ENCODE measurements at regions of chr5 and their contacts with region 1.

Region 1: DNA sequence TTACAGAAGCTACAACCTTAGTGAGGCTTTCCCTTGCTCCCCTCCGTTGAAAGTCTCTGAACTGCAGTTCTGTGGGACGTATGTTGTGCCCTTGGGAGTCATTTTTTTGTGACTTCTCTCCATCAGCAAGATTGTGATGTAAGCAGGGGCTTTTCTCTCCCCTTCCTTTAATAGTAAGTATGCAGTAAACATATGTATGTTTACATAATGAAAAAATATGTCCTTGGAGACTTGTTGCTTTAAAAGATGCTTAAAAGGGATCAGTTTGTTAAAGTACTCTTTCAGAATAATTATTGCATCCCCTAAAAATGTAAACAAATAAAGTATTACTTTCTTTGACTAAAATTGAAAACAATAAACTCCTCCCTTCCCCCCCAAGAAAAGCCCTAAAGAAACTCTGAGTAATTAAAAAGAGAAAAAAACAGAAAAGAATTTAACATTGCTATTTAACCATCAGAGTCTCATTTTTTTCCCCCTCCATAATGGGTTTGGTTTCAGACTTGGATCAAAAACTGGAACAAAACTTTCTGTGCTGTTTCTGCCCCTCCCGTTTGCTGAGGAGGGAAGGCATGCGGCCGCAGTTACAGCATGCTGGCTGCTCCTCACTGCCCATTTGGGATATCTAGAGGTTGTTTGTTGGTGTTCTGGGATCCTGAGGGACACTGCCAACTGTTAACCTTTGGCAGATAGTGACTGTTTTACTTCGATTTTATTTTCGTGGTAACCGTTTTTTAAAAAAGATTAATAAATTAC is 40.2 kb downstream of the TRIO start:
- DNase-seq: no peak
- ATAC-seq: no peak
- H3K4me3 ChIP-seq: peak overlapping the region; percentile 13 to 29; a peak in 3 of 4 replicates
- H3K27ac ChIP-seq: peak overlapping the region; percentile 99
- H3K4me1 ChIP-seq: peaks cover 97% of the 10 kb centered on the region
- H3K27me3 ChIP-seq: no peaks in the 10 kb centered on the region
- CTCF ChIP-seq: no peak

Region 2: GRCh38 chr5:13804336-13804735 is 379.0 kb before region 1 on chr5:
- CTCF ChIA-PET with region 1: no interaction called
- POLR2A ChIA-PET with region 1: interaction called, 3 read pairs
- in situ Hi-C with region 1: no loop called
- intact Hi-C with region 1: loop called (anchors 5 kb)
- DNase-seq: no peak
- ATAC-seq: no peak
- H3K4me3 ChIP-seq: no peak overlapping the region
- H3K27ac ChIP-seq: no peak overlapping the region
- H3K4me1 ChIP-seq: no peaks in the 10 kb centered on the region
- H3K27me3 ChIP-seq: no peaks in the 10 kb centered on the region
- CTCF ChIP-seq: no peak

Region 3: GRCh38 chr5:14204785-14205321 is 21.5 kb after region 1 on chr5:
- CTCF ChIA-PET with region 1: no interaction called
- POLR2A ChIA-PET with region 1: interaction called, 11 read pairs
- in situ Hi-C with region 1: no loop called
- intact Hi-C with region 1: no loop called
- DNase-seq: no peak
- ATAC-seq: peak; percentile 9
- H3K4me3 ChIP-seq: peak overlapping the region; percentile 7 to 40; a peak in 3 of 4 replicates
- H3K27ac ChIP-seq: peak overlapping the region; percentile 99
- H3K4me1 ChIP-seq: peaks cover 95% of the 10 kb centered on the region
- H3K27me3 ChIP-seq: no peaks in the 10 kb centered on the region
- CTCF ChIP-seq: no peak

Region 4: GRCh38 chr5:14213813-14214585 is 30.6 kb after region 1 on chr5:
- CTCF ChIA-PET with region 1: no interaction called
- POLR2A ChIA-PET with region 1: interaction called, 13 read pairs
- in situ Hi-C with region 1: no loop called
- intact Hi-C with region 1: no loop called
- DNase-seq: no peak
- ATAC-seq: peak; percentile 28
- H3K4me3 ChIP-seq: peak overlapping the region in 1 of 2 experiments; percentile 2; a peak in 1 of 4 replicates
- H3K27ac ChIP-seq: peak overlapping the region; percentile 99
- H3K4me1 ChIP-seq: peaks cover 100% of the 10 kb centered on the region
- H3K27me3 ChIP-seq: no peaks in the 10 kb centered on the region
- CTCF ChIP-seq: no peak

Region 5: DNA sequence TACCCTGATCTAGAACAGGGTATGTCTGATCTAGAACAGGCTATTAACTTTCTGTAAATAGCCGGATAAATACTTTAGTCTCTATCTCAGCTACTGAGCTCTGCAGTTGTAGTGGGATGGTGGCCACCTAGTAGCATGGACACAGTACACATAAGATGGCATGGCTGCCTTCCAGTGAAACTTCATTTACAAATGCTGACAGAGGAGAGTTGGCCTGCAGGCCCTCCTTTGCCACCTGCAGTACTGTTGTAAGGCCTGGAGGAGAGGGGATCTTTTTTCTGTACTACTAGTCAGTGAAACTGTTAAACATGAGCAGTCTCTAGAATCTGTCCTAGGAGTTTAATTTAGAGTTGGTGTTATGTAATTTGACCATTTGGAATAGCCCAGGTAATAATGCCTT is 45.8 kb after region 1 on chr5:
- CTCF ChIA-PET with region 1: no interaction called
- POLR2A ChIA-PET with region 1: no interaction called
- in situ Hi-C with region 1: no loop called
- intact Hi-C with region 1: no loop called
- DNase-seq: no peak
- ATAC-seq: no peak
- H3K4me3 ChIP-seq: no peak overlapping the region
- H3K27ac ChIP-seq: peak overlapping the region; percentile 96
- H3K4me1 ChIP-seq: peaks cover 95% of the 10 kb centered on the region
- H3K27me3 ChIP-seq: no peaks in the 10 kb centered on the region
- CTCF ChIP-seq: no peak